Breast epithelium (tissue), 4 donors: ENCODE measurements at regions of chrX and their contacts with region 1.

Region 1: GRCh38 chrX:7019545-7019944 is 128.0 kb upstream of the STS start:
- DNase-seq: no peak
- H3K4me3 ChIP-seq: no peak overlapping the region
- H3K27ac ChIP-seq: no peak overlapping the region
- H3K4me1 ChIP-seq: no peaks in the 10 kb centered on the region
- H3K27me3 ChIP-seq: no peaks in the 10 kb centered on the region
- CTCF ChIP-seq: no peak
- POLR2A ChIP-seq: no peak

Region 2: GRCh38 chrX:5857232-5857631 is 1162.3 kb before region 1 on chrX:
- intact Hi-C with region 1: loop called (anchors 10 kb)
- DNase-seq: no peak
- H3K4me3 ChIP-seq: no peak overlapping the region
- H3K27ac ChIP-seq: no peak overlapping the region
- H3K4me1 ChIP-seq: no peaks in the 10 kb centered on the region
- H3K27me3 ChIP-seq: no peaks in the 10 kb centered on the region
- CTCF ChIP-seq: no peak
- POLR2A ChIP-seq: no peak

Region 3: DNA sequence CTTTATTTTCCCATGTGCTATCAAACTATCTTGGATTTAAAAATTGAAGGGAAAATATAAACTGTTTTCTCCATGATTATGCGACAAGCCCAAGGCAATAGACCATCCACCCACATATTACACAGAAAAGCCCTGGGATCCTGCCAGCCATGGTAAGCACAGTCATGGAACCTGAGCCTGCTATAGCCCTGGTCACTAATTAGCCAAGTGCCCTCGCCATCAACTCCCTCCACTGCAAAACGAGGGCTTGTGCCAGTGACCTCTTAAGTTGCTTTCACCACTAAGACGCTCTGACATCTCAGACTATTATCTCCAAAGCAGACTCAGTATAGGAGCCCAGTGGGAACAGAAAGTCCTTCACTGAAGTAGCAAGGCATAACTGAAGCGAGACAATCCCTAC is 860.1 kb before region 1 on chrX:
- intact Hi-C with region 1: no loop called
- DNase-seq: no peak
- H3K4me3 ChIP-seq: no peak overlapping the region
- H3K27ac ChIP-seq: no peak overlapping the region
- H3K4me1 ChIP-seq: no peaks in the 10 kb centered on the region
- H3K27me3 ChIP-seq: no peaks in the 10 kb centered on the region
- CTCF ChIP-seq: no peak
- POLR2A ChIP-seq: no peak

Region 4: GRCh38 chrX:7889680-7890079 is 870.1 kb after region 1 on chrX:
- intact Hi-C with region 1: no loop called
- DNase-seq: no peak
- H3K4me3 ChIP-seq: no peak overlapping the region
- H3K27ac ChIP-seq: no peak overlapping the region
- H3K4me1 ChIP-seq: no peaks in the 10 kb centered on the region
- H3K27me3 ChIP-seq: no peaks in the 10 kb centered on the region
- CTCF ChIP-seq: no peak
- POLR2A ChIP-seq: no peak